Activated naive CD4-positive, alpha-beta T cell treated with anti-CD3 and anti-CD28 coated beads, Interleukin-2, amount 10 ng/mL, durations not matched to agents 7 days and 5 days (primary cell): ENCODE measurements at regions of chr10 and their contacts with region 1.

Region 1: DNA sequence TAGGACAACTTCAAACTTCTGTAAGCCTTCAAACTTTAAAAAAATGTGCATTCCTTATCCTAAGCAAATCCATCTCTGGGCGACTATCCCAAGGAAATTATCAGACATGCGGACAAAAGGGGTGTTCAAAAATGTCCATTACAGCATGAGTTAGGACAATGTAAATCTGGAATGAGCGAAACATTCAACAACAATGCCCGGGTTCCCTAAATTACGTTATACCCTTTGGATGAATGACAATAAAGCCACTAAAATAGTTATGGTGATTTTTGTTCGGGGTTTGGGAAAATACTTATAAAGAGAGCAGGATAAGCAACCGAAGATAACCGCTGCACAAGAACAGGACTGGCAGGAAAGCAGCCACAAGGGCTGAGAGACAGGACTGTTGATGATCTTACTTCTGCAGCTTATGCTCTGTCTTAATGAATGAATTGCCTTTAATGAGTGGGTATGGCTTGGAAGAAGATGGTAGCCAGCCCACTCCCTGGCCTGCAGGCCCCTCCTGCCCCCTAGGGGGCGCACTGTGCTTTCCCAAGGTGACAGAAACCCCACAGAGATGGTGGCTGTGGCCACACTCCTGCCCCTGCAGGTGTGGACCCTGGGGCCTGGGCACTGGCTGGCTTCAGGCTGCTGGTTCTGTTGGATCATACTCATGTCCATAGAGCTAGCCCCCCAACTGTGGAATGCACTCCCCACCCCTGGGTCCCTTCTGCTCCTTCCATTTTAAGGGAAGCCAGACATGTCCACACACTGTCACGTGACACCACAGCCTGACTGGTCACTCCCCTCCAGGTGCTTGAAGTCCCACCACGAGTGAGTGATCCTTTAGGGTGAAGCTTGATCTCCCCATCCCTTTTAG is 45.0 kb downstream of the ZCCHC24 start:
- DNase-seq: peak; percentile 70
- H3K4me3 Mint-ChIP-seq: no peak overlapping the region
- H3K27ac Mint-ChIP-seq: no peak overlapping the region
- H3K4me1 Mint-ChIP-seq: no peaks in the 10 kb centered on the region
- H3K27me3 Mint-ChIP-seq: peaks cover 48% of the 10 kb centered on the region

Region 2: DNA sequence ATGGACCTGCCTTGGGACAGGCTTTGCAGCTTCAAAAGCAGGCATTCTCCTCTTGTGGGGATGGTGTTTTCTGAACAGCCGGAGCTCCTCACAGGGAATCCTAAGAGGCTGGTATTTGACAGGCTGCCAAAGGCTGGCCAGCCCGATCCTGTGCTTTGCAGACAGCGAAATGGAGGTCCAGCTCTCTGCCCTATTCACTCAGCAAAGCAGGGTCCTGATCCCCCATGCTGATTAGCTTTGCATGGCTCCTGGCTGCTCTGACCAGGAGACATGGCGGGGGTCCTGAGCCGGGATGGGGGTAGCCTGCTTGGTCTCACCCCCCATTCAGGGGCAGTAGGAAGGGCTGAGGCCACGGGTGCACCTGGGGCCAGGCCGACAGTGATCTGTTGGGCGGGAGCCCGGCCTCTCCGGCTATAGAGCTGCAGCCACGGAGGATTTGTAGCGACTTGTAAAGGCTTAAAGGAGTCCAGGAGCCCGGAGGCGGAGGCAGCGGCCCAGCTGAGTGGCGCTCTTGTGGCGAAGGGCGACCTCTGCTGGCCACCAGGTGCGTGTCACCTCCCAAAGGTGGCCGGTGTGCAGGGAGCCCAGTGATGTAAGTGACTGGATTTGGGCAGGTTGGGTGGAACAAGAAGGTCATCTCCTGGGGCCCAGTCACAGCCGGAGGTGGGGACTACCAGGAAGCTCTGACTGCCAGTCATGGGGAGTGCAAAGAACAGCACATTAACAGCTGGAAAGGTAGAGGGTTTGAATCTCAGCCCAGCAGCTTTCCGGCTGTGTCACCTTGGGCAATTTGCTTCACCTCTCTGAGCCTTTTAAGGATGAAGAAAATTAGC is 205.1 kb before region 1 on chr10:
- CTCF ChIA-PET with region 1: no interaction called
- DNase-seq: peak; percentile 84
- H3K4me3 Mint-ChIP-seq: no peak overlapping the region
- H3K27ac Mint-ChIP-seq: no peak overlapping the region
- H3K4me1 Mint-ChIP-seq: no peaks in the 10 kb centered on the region
- H3K27me3 Mint-ChIP-seq: peaks cover 4% of the 10 kb centered on the region

Region 3: DNA sequence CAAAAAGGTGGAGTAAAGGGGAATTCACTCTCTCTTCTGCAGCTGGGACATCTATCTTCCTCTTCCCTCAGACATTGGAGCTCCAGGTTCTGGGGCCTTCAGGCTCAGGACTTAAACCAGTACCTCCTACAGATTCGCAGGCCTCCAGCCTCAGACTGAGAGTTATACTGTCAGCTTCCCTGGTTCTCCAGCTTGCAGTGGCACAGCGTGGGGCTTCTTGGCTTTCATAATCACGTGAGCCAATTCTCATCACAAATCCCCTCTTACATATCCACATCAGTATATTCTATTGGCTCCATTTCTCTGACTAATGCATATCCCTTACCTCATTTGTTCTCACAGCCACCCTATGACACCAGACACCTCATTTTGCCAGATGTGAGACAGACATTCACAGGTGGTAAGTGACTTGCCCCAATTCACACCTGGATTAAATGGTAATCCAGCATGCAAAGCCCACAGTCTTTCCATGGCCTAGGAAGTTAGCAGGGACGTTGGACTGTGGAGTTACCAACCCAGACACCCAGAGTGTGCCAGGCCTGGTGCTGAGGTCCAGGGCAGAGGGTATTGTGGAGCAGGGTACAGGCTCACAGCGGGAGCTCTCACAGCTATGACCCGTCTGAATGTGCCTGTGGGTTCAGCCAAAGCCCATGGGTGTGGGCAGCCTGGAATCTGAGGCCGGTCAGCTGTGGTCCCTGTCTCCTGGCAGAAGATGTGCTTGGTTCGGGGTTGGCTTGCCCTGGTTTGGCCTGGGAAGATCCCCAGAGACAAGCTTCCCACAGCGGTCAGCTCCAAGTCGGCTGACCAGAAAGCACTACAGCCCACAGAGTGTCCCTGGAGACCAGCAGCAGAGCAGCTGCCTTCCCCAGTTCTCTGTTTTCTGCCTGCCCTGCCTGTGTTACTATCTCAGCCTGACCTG is 63.5 kb after region 1 on chr10:
- CTCF ChIA-PET with region 1: interaction called, 24 read pairs
- DNase-seq: no peak
- H3K4me3 Mint-ChIP-seq: no peak overlapping the region
- H3K27ac Mint-ChIP-seq: no peak overlapping the region
- H3K4me1 Mint-ChIP-seq: no peaks in the 10 kb centered on the region
- H3K27me3 Mint-ChIP-seq: peaks cover 10% of the 10 kb centered on the region